Heart right ventricle (tissue), 16 donors: ENCODE measurements at regions of chr18 and their contacts with region 1.

Region 1: DNA sequence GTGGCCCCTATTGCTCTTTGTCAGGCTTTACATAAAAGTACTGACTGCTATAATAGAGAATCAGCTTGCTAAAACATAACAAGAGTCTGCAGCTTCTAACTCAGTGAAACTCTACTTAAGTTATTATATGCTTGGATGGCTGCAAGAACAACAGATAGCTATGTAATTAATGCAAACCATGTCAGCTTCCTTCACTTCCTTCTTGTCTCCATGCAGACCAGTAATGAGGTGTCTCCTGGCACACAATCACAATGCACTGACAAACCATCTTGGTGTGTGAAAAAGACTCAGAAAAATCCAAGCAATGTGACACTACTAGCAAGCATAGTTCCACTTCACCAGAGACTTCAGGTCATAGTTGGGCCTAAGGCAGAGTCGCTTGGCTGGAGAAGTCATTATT is 2068.9 kb upstream of the PIK3C3 start:
- DNase-seq: no peak
- ATAC-seq: no peak
- H3K4me3 ChIP-seq: no peak overlapping the region
- H3K27ac ChIP-seq: no peak overlapping the region
- H3K4me1 ChIP-seq: no peaks in the 10 kb centered on the region
- H3K27me3 ChIP-seq: no peaks in the 10 kb centered on the region
- CTCF ChIP-seq: no peak

Region 2: DNA sequence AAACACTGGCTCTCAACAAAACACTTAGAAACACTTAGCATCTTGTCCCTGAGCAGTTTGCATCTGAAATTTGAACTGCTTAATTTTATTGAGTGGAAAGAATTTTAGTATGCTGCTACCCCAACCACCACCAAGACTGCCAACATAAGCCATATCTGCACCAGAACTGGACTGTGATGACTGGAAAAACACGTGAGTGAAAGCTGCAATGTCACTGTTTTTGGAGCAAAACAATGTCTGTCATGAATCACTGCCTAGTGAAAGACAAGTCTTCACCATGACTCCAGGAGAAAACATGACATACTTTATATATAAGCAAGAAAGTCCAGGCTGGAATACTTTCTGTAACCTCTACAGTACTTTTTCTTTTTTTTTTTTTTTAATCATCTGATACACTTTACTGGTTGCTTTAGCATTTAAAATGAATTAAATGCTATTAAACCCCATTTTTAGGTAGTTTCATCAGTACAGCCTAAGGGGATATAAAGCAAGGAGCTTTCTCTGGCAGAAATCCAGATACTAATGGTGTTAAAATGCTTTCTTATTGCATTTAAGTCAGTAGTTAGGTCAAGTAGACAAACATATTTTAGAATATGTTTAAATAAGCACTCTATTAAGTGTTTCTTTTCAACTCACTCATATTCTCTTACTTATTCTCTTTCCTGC is 60.5 kb before region 1 on chr18:
- intact Hi-C with region 1: loop called in 1 of 10 experiments (anchors 10 kb)
- DNase-seq: no peak
- ATAC-seq: no peak
- H3K4me3 ChIP-seq: no peak overlapping the region
- H3K27ac ChIP-seq: no peak overlapping the region
- H3K4me1 ChIP-seq: no peaks in the 10 kb centered on the region
- H3K27me3 ChIP-seq: no peaks in the 10 kb centered on the region
- CTCF ChIP-seq: no peak

Region 3: DNA sequence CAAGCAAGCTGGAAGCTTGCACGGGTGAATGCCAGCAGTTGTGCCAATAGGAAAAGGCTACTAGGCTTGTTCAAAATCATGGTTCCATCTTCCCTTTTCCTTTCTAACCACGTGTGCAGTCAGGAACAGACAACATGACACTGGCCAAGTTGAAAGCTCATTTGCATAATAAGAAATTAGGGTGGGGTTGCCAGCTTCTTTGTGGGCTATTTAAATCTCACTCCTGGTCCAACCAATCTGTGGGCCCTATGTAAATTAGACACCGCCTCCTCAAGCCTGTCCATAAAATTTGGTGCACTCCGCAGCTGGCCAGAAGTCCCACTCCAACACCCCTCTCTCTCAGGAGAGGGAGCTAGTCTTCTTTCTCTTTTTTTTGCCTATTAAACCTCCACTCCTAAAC is 120.5 kb after region 1 on chr18:
- intact Hi-C with region 1: no loop called
- DNase-seq: no peak
- ATAC-seq: no peak
- H3K4me3 ChIP-seq: no peak overlapping the region
- H3K27ac ChIP-seq: no peak overlapping the region
- H3K4me1 ChIP-seq: no peaks in the 10 kb centered on the region
- H3K27me3 ChIP-seq: no peaks in the 10 kb centered on the region
- CTCF ChIP-seq: no peak

Region 4: DNA sequence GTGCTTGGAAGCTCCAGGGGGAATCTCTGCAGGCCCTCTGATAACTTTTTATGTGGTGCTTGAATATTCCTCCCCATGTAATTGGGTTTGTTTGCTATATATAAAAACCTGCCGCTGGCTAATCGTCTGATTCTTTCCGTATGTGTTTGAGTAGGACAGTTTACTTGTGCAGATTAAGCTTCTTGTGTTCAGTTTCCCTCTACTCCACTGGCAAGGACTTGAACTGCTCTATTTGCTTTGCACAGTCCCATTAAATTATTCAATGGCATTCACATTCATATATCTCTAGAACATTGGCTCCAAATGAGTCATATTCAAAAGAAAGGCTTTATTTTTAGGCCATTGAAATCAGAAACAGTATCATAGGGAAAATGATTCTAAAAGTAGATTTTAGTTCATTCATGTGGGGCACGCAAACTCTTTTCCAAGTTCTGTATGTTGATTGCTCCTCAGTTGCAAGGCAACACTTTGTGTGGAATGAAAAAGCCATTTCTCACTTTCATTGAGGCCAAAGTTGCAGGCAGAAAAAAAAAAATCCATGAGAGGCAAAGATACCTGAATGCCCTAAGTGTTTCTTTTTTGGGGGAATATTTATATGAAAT is 386.6 kb after region 1 on chr18:
- intact Hi-C with region 1: no loop called
- DNase-seq: no peak
- ATAC-seq: no peak
- H3K4me3 ChIP-seq: no peak overlapping the region
- H3K27ac ChIP-seq: no peak overlapping the region
- H3K4me1 ChIP-seq: no peaks in the 10 kb centered on the region
- H3K27me3 ChIP-seq: no peaks in the 10 kb centered on the region
- CTCF ChIP-seq: no peak